IMR-90 (cell line): ENCODE measurements at regions of chr16 and their contacts with region 1.

Region 1: DNA sequence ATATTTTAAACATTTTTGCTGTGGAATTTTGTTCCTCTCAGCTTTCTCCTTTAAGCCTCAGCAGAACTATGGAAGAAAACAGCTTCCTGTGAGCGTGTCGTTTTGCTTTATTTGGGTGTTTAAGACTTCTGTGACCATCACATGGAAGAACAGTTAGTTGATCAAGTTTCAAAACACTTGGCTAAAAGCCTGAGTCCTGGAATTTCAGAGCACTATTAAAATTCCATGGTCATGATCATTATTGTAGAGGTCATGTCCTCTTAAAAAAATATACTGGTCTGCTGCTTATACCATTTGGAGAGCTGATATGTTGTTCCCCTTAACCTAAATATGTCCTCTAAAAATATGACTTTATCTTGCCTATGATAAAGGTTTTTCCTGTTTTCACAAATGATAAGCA is 12.6 kb upstream of the CDR2 start:
- DNase-seq: peak; percentile 95
- ATAC-seq: peak; percentile 96
- H3K4me3 ChIP-seq: no peak overlapping the region
- H3K27ac ChIP-seq: peak overlapping the region; percentile 41; the same call in 1 of the 2 replicates
- H3K4me1 ChIP-seq: peaks cover 11% of the 10 kb centered on the region
- H3K27me3 ChIP-seq: no peaks in the 10 kb centered on the region
- CTCF ChIP-seq: no peak
- POLR2A ChIP-seq: no peak
- RAD21 ChIP-seq: no peak

Region 2: GRCh38 chr16:22109258-22109898 is 277.6 kb before region 1 on chr16:
- CTCF ChIA-PET with region 1: no interaction called
- POLR2A ChIA-PET with region 1: no interaction called
- dilution Hi-C with region 1: no loop called
- in situ Hi-C with region 1: no loop called
- intact Hi-C with region 1: no loop called
- DNase-seq: no peak
- ATAC-seq: no peak
- H3K4me3 ChIP-seq: no peak overlapping the region
- H3K27ac ChIP-seq: no peak overlapping the region
- H3K4me1 ChIP-seq: no peaks in the 10 kb centered on the region
- H3K27me3 ChIP-seq: peaks cover 34% of the 10 kb centered on the region
- CTCF ChIP-seq: no peak
- POLR2A ChIP-seq: no peak
- RAD21 ChIP-seq: no peak

Region 3: GRCh38 chr16:22123146-22123545 is 263.8 kb before region 1 on chr16:
- CTCF ChIA-PET with region 1: no interaction called
- POLR2A ChIA-PET with region 1: no interaction called
- dilution Hi-C with region 1: no loop called
- in situ Hi-C with region 1: no loop called
- intact Hi-C with region 1: no loop called
- DNase-seq: no peak
- ATAC-seq: no peak
- H3K4me3 ChIP-seq: no peak overlapping the region
- H3K27ac ChIP-seq: no peak overlapping the region
- H3K4me1 ChIP-seq: no peaks in the 10 kb centered on the region
- H3K27me3 ChIP-seq: peaks cover 4% of the 10 kb centered on the region; the same call in 1 of the 2 replicates
- CTCF ChIP-seq: no peak
- POLR2A ChIP-seq: no peak
- RAD21 ChIP-seq: no peak

Region 4: DNA sequence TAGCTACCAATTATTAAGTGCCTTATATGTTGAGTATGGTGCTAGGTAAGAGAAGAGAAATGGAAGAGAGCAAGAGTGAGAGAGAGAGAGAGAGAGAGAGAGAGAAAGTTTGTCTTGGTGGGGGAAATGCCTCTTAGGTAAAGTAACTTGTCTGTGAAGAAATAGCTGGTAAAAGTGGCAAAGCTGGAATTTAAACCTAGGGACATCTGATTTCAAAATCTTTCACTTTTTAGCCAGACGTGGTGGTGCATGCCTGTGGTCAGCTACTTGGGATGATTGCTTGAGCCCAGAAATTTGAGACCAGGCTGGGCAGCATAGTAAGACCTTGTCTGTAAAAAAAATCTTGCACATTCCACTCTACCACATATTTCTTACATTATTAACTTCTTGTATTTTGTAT is 10.5 kb after region 1 on chr16:
- CTCF ChIA-PET with region 1: no interaction called
- POLR2A ChIA-PET with region 1: no interaction called
- dilution Hi-C with region 1: no loop called
- in situ Hi-C with region 1: no loop called
- intact Hi-C with region 1: loop called (anchors 1 kb)
- DNase-seq: peak; percentile 96
- ATAC-seq: peak; percentile 97
- H3K4me3 ChIP-seq: no peak overlapping the region
- H3K27ac ChIP-seq: peak overlapping the region; percentile 89; the same call in 1 of the 2 replicates
- H3K4me1 ChIP-seq: peaks cover 15% of the 10 kb centered on the region
- H3K27me3 ChIP-seq: no peaks in the 10 kb centered on the region
- CTCF ChIP-seq: no peak
- POLR2A ChIP-seq: no peak
- RAD21 ChIP-seq: no peak

Region 5: DNA sequence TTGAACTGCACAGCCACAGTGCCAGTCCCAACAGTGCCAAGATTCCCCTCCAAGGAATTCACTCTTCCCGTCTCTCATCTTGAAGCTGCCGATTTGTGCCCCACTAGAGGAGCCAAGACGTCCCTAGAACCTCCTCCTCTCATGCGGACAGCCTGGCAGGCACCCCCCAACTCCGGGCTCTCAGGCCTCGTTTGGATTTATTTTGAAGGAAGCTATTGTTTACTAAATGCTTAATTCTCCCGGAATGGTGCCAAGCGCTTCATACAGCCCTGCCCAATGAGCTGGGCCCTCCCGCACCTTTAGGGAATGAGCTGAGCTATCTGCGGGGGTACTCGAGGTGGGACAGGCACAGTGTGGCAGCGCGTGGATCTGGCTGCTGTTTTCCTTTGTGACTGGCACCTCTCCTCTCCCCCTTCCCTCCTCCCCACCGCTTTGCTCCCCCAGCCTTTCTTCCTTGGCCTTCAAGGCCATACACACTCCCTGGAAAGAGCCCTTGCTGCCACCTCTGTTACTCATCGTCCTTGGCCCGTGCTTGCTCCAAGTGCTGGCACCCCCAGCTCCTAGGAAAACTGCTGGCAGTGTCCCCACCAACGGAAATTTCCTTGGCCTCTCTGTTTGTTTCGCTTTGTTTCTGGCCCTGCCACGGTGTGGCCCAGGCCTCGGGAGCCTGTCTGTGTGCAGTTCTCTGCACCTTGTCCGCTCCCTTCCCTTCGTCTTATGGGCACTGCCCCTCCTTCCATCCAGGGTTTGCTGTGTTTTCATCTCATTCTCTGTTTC is 37.4 kb after region 1 on chr16:
- CTCF ChIA-PET with region 1: no interaction called
- POLR2A ChIA-PET with region 1: no interaction called
- dilution Hi-C with region 1: no loop called
- in situ Hi-C with region 1: no loop called
- intact Hi-C with region 1: no loop called
- DNase-seq: no peak
- ATAC-seq: peak; percentile 65
- H3K4me3 ChIP-seq: no peak overlapping the region
- H3K27ac ChIP-seq: peak overlapping the region; percentile 39; the same call in 1 of the 2 replicates
- H3K4me1 ChIP-seq: peaks cover 13% of the 10 kb centered on the region
- H3K27me3 ChIP-seq: no peaks in the 10 kb centered on the region
- CTCF ChIP-seq: no peak
- POLR2A ChIP-seq: no peak
- RAD21 ChIP-seq: no peak